ENCODE measurements at regions of chr9 and their contacts with region 1.

Region 1: GRCh38 chr9:29793970-29794369 is 2220.7 kb upstream of the C9orf72 start:
- DNase-seq: no peak
- ATAC-seq: no peak

Region 2: DNA sequence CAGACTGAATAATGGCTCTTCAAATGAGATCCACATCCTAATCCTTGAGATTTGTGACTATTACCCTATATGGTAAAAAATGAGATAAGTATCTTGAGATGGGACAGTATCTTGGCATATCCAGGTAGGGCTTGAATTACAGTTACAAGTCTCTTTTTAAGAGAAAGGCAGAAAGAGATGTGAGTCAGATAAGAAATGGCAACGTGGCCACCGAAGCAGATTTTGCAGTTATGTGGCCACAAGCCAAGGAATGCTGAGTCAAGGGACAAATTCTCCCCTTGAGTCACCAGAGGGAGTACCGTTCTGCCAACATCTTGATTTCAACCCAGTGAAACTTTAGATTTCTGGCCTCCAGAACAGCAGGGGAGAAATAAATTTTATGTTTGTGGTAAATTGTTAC is 237.7 kb before region 1 on chr9:
- intact Hi-C with region 1: no loop called
- DNase-seq: no peak
- ATAC-seq: no peak

Region 3: DNA sequence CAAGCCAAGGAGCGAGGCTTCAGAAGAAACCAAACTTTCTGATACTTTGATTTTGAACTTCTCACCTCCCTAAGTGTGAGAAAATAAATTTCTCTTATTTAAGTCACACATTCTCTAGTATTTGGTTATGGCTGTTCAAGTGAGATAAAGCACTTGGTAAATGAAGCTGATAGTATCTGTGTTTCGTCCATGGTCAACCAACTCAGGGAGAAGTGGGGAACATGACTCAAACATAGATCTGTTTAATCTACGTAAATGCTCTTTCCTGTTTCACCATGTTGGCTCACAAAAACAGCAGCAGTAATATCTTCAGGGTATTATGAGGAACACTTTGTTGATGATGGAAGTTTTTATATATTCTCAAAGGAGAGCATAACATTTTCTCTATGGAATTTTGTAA is 53.5 kb before region 1 on chr9:
- intact Hi-C with region 1: loop called (anchors 5 kb)
- DNase-seq: no peak
- ATAC-seq: no peak